WTC11 (cell line): ENCODE measurements at regions of chr4 and their contacts with region 1.

Region 1: GRCh38 chr4:76689241-76689817 is 208.6 kb downstream of the SOWAHB start:
- DNase-seq: peak; percentile 81
- ATAC-seq: peak; percentile 92
- H3K4me3 Mint-ChIP-seq: peak overlapping the region; percentile 95
- H3K27ac Mint-ChIP-seq: peak overlapping the region; percentile 95; the same call in 1 of the 2 replicates
- H3K4me1 Mint-ChIP-seq: peaks cover 51% of the 10 kb centered on the region
- H3K27me3 Mint-ChIP-seq: no peaks in the 10 kb centered on the region
- CTCF ChIP-seq: no peak

Region 2: GRCh38 chr4:76585897-76586360 is 103.4 kb before region 1 on chr4:
- CTCF ChIA-PET with region 1: no interaction called
- POLR2A ChIA-PET with region 1: interaction called, 11 read pairs
- DNase-seq: peak; percentile 91
- ATAC-seq: peak; percentile 78
- H3K4me3 Mint-ChIP-seq: peak overlapping the region; percentile 74
- H3K27ac Mint-ChIP-seq: peak overlapping the region; percentile 94
- H3K4me1 Mint-ChIP-seq: peaks cover 67% of the 10 kb centered on the region
- H3K27me3 Mint-ChIP-seq: no peaks in the 10 kb centered on the region
- CTCF ChIP-seq: no peak

Region 3: DNA sequence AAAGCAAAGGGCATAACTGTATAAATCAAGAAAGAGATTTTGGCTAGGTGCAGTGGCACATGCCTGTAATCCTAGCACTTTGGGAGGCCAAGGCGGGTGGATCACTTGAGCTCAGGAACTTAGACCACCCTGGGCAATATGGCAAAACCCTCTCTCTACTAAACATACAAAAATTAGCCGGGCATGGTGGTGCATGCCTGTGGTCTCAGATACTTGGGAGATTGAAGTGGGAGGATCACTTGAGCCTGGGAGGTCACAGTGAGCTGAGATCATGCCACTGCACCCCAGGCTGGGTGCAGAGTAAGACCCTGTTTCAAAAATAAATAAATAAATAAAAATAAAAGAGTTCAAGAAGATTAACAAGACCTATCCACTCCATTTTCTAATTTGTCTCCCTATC is 18.7 kb before region 1 on chr4:
- CTCF ChIA-PET with region 1: no interaction called
- POLR2A ChIA-PET with region 1: no interaction called
- DNase-seq: no peak
- ATAC-seq: no peak
- H3K4me3 Mint-ChIP-seq: no peak overlapping the region
- H3K27ac Mint-ChIP-seq: no peak overlapping the region
- H3K4me1 Mint-ChIP-seq: no peaks in the 10 kb centered on the region
- H3K27me3 Mint-ChIP-seq: no peaks in the 10 kb centered on the region
- CTCF ChIP-seq: no peak